Activated CD4-positive, alpha-beta T cell treated with anti-CD3 and anti-CD28 coated beads, Interleukin-2, amount 10 ng/mL, durations not matched to agents 24 days and 14 days (primary cell): ENCODE measurements at regions of chr2 and their contacts with region 1.

Region 1: DNA sequence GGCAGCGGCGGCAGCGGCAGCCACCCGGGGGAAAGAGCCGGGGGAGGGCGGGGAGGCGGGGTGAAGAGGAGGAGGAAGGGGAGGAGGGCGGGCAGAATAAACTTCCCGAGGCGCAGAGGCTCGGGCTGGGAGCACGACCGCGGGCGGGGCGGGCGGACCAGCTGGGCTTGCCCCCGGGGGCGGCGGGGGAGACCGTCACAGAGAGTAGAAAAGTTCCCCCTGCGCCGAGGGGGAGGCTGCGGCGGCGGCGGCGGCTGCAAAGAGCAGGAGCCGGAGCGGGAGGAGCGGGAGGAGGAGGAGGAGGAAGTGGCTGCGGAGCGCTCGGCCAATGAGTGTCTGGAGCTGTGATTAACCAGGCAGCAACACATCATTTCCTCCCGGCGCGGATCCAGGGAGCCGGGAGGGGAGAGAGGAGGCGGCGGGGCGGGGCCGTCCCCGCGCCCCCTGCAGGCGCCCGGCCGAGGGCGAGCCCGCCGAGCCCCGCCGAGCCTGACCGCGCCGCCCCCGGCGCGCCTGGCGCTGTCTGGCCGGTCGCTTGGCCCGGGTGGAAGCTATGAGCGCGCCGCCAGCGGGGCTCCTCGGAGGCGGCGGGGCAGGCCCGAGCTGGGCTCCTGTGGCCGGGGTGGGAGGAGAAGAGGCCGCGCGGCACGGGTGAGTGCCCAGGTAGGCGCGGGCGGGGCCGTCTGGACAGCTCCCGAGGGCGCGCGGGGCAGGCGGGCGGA is at the start of gene ACVR1:
- DNase-seq: peak; percentile 95
- H3K4me3 Mint-ChIP-seq: peak within 1 kb of the TSS; percentile 86
- H3K27ac Mint-ChIP-seq: peak within 1 kb of the TSS; percentile 95
- H3K4me1 Mint-ChIP-seq: peaks cover 56% of the 10 kb centered on the region
- H3K27me3 Mint-ChIP-seq: no peaks in the 10 kb centered on the region
- total RNA-seq, gene ACVR1: 45.5 and 50.7 TPM in 2 replicates

Region 2: DNA sequence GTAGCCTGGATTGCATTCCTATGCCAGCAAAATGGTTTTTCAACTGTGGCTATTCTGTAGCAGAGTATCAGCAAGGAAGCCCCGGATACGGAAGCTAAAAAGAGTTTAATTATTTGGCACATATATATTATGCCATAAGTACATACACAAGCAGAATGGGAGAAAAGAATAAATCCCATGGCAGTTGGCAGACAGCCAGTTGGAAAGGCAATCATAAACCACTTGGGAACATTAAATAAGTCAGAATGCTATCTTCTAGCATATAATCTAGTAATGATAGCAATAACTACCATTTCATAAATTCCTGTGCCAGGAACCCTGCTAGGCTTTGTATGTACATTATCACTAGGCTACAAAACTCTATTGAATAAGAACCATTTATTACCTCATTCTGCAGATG is 592.8 kb before region 1 on chr2:
- intact Hi-C with region 1: no loop called
- DNase-seq: no peak
- H3K4me3 Mint-ChIP-seq: no peak overlapping the region
- H3K27ac Mint-ChIP-seq: no peak overlapping the region
- H3K4me1 Mint-ChIP-seq: peaks cover 3% of the 10 kb centered on the region
- H3K27me3 Mint-ChIP-seq: peaks cover 18% of the 10 kb centered on the region

Region 3: DNA sequence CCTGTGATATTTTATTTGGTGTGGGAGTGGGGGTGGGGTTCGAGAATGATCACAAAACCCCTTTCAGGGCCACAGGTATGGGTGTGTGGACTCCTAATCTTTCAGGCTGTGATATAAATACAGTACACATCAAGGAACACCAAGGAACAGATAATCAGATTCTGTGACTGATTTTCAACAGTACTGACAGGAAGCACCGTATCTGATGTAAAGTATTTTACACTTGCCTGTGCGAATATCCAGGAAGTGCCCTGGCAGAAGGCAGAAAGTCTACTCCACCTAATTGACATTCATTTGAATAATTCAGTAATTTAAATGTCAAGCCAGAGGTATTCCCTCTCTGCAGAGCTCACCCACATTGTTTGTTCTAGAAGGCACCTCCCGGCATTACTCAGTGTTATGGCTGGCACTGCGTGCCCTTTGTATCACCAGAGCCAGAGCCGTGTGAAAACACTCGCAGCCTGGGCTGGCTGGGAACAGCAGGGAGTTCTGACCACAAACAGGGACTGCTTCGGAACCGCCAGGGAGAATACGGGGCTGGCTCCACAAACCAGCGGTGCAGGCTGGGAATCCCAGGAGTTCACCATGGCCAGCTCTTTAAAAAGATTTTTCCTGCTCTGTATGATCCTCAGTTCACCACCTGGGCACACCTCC is 91.9 kb before region 1 on chr2:
- intact Hi-C with region 1: loop called (anchors 1 kb)
- DNase-seq: peak; percentile 67
- H3K4me3 Mint-ChIP-seq: peak overlapping the region; percentile 47
- H3K27ac Mint-ChIP-seq: peak overlapping the region; percentile 78
- H3K4me1 Mint-ChIP-seq: peaks cover 70% of the 10 kb centered on the region
- H3K27me3 Mint-ChIP-seq: no peaks in the 10 kb centered on the region

Region 4: DNA sequence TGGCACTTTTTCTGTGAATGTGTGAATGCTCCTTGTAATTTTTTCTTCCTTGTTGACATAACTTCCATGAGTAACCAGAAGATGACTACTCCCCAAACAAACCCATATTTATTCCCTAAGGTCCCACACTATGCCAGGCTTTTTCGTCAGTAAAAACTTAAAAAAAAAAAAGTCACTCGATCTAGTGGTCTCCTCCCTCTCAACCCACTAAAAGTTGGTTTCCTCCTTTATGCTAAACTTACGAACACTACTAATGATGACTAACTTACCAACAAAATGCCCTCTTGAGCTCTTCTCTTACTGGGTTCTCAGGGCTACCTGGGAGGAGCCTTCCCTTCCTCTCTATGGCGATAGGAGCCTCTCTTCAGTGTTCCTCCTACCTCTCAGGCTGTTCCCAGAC is 18.3 kb before region 1 on chr2:
- intact Hi-C with region 1: loop called (anchors 1 kb)
- DNase-seq: no peak
- H3K4me3 Mint-ChIP-seq: no peak overlapping the region
- H3K27ac Mint-ChIP-seq: peak overlapping the region; percentile 52
- H3K4me1 Mint-ChIP-seq: peaks cover 31% of the 10 kb centered on the region
- H3K27me3 Mint-ChIP-seq: no peaks in the 10 kb centered on the region

Region 5: DNA sequence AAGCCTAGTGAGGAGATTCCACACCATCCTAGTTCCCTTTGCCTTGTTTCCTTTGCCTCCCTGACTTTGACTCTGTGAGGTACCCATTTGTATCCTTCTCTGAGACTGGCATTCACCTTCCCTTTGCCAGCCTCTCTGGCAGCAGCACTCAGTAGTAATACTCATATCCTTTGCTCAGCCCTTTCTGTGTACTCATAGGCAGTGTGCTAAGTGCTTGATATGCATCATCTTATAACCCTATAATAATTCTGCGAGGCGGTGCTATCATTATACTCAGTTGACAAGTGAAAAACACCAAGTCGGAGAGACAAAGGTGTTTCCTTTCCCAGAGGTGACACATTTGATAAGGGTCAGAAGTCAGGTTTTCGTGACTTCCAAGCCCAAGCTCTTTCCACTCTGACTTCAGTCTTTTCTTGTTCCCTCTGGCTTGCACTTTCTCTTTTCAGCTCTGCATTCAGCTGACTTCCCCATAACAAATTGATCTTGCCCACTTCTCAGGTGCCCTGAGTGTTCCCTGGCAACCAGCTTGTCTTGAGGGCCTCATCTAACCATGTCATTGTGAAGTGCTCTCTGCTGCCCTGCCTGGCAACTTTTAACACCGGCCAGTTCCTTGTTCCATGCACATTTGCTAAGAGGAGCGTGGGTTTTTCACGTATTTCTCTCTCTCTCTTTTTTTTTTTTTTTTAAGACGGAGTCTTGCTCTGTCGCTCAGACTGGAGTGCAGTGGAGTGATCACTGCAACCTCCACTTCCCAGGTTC is 130.9 kb after region 1 on chr2:
- intact Hi-C with region 1: loop called (anchors 5 kb)
- DNase-seq: peak; percentile 63
- H3K4me3 Mint-ChIP-seq: no peak overlapping the region
- H3K27ac Mint-ChIP-seq: no peak overlapping the region
- H3K4me1 Mint-ChIP-seq: peaks cover 18% of the 10 kb centered on the region
- H3K27me3 Mint-ChIP-seq: peaks cover 3% of the 10 kb centered on the region